ENCODE measurements at regions of chr20 and their contacts with region 1.

Region 1: GRCh38 chr20:37178839-37179670 is at the starts of genes MROH8 and RPN2:
- DNase-seq: peak; percentile 93
- H3K4me3 Mint-ChIP-seq: peak within 1 kb of the TSS; percentile 99
- H3K27ac Mint-ChIP-seq: peak within 1 kb of the TSS; percentile 96
- H3K4me1 Mint-ChIP-seq: peaks cover 32% of the 10 kb centered on the region
- H3K27me3 Mint-ChIP-seq: peaks cover 4% of the 10 kb centered on the region
- total RNA-seq, gene MROH8: 1.1 and 1.3 TPM in 2 replicates
- total RNA-seq, gene RPN2: 223 and 234 TPM in 2 replicates

Region 2: GRCh38 chr20:37007898-37008649 is 171.0 kb before region 1 on chr20:
- intact Hi-C with region 1: loop called (anchors 10 kb)
- DNase-seq: no peak
- H3K4me3 Mint-ChIP-seq: no peak overlapping the region
- H3K27ac Mint-ChIP-seq: peak overlapping the region; percentile 72
- H3K4me1 Mint-ChIP-seq: peaks cover 21% of the 10 kb centered on the region
- H3K27me3 Mint-ChIP-seq: no peaks in the 10 kb centered on the region

Region 3: DNA sequence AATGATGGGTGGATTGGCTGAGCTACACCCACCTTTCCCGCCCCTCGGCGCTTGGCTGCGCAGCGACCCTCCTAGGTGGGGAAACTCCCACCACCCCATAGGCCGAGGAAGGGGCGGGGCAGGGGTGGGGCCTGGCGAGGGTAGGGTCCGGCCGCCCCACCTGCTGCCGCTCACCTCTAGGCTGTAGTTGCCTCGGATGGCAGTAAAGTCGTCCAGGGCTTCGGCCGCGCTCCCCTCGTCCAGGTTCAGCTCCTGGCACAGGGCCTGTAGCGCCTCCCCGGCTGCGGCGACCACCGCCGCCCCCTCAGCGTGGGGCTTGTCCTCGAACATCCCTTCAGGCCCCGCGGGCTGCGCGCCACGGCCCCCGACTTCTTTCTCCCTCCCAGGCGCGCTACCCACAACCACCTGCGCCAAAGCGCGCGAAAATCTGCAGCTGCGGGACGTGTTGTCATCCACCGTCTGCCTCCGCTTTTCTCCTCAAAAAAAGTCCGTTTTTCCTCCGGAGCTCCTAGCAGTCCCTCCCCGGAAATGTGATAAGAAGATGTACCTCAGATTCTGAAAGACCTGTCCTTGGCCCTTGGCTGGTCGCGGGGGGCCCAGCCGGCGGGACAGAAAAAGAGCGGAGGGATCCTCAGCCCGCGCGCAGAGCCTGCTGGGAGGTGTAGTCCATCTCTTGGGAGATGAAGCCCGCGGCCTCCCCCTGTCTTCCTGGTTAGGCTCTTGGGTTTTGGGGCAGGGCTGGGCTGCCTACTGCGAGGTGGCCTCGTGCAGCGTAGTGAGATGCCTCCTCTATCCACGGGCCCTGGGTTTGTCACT is 83.2 kb before region 1 on chr20 and contains the start of gene RBL1:
- intact Hi-C with region 1: loop called (anchors 1 kb)
- DNase-seq: peak; percentile 83
- H3K4me3 Mint-ChIP-seq: peak within 1 kb of the TSS; percentile 99
- H3K27ac Mint-ChIP-seq: peak within 1 kb of the TSS; percentile 100
- H3K4me1 Mint-ChIP-seq: peaks cover 37% of the 10 kb centered on the region
- H3K27me3 Mint-ChIP-seq: peaks cover 3% of the 10 kb centered on the region
- total RNA-seq, gene RBL1: 49.2 and 53.7 TPM in 2 replicates

Region 4: GRCh38 chr20:37527638-37528441 is 348.8 kb after region 1 on chr20 and contains the start of gene BLCAP:
- intact Hi-C with region 1: loop called (anchors 2 kb)
- DNase-seq: peak; percentile 86
- H3K4me3 Mint-ChIP-seq: peak within 1 kb of the TSS; percentile 86
- H3K27ac Mint-ChIP-seq: peak within 1 kb of the TSS; percentile 99
- H3K4me1 Mint-ChIP-seq: peaks cover 46% of the 10 kb centered on the region
- H3K27me3 Mint-ChIP-seq: peaks cover 5% of the 10 kb centered on the region
- total RNA-seq, gene BLCAP: 30.9 and 32.1 TPM in 2 replicates